ENCODE measurements at regions of chr5 and their contacts with region 1.

Region 1: DNA sequence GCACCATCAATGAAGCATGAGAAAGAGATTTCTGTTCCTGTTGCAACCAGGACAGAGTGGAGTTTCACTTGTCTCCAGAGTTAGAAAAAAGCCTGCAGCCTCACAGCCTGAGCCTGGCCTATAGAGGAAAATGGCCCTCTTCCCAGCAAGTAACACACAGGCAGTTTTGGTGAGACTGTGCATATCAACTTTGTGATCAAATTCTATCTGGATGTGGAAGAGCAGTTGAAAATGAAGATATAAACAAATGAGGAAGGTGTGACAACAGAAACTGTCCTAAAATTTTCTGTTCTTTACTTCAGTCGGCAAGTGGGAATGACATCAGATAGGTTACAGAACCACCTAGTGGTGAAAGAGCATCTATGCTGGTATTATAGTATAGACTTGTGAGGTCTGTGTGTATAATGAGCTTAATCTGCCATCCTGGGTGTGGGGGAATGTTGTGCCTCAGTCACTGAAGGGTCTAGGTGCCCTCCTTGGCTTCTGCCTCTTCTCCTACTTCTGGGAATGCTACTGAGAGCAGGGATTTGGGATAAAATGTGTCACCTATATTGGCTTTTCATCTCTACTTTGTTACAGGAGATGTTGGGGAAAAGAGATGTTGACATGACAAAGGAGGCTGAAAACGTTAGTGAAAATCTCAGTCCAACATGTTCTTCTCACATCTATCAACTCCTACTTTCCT is 28.2 kb downstream of the YIPF5 start:
- DNase-seq: peak; percentile 70
- H3K4me3 Mint-ChIP-seq: no peak overlapping the region
- H3K27ac Mint-ChIP-seq: no peak overlapping the region
- H3K4me1 Mint-ChIP-seq: peaks cover 15% of the 10 kb centered on the region
- H3K27me3 Mint-ChIP-seq: no peaks in the 10 kb centered on the region
- CTCF ChIP-seq: peak; percentile 89

Region 2: GRCh38 chr5:143506881-143507551 is 635.3 kb before region 1 on chr5:
- CTCF ChIA-PET with region 1: interaction called, 3 read pairs
- POLR2A ChIA-PET with region 1: interaction called, 3 read pairs
- intact Hi-C with region 1: loop called (anchors 10 kb)
- DNase-seq: peak; percentile 98
- H3K4me3 Mint-ChIP-seq: peak overlapping the region; percentile 44
- H3K27ac Mint-ChIP-seq: peak overlapping the region; percentile 84
- H3K4me1 Mint-ChIP-seq: peaks cover 41% of the 10 kb centered on the region
- H3K27me3 Mint-ChIP-seq: no peaks in the 10 kb centered on the region
- CTCF ChIP-seq: peak; percentile 16

Region 3: DNA sequence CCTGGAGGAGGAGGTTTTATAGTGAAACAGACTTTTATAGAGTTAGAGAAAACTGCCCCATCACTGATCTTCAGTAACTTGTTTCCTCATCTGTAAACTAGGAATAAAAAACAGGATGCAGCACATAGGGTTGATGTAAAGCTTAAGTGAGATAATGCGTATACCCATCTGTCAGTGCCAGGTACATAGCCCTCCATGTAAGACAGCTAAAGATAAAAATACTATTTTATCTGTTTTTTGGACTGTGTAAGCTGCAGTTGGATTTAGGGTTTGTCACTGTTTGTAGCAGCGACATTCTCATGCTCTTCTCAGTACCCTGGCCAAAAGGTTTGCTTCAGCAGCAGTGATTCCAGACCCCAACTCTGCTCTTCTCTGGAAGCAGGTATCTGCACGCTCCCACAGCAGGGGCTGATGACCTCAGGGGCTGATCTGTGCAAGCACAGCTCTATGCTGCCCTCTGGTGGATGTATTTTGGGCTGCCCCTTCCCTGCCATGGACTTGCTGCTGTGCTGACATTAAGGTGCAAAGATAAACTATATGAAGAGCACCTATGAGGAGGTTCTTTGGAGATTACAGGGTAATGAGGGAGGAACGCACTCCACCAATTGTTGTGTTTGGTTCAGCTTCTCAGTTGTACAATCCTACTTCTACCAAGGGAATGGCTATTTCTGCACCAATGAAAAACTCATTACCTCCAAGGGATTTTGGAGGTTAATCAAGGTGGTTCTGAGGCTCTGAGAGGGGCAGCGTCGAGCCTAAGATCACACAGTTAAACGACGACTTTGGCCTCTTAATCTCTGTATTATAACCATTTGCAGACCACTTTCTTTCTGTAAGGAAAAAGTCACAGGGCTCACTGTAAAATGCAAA is 317.2 kb before region 1 on chr5:
- CTCF ChIA-PET with region 1: interaction called, 71 read pairs
- POLR2A ChIA-PET with region 1: no interaction called
- intact Hi-C with region 1: loop called (anchors 1 kb)
- DNase-seq: peak; percentile 84
- H3K4me3 Mint-ChIP-seq: no peak overlapping the region
- H3K27ac Mint-ChIP-seq: no peak overlapping the region
- H3K4me1 Mint-ChIP-seq: peaks cover 6% of the 10 kb centered on the region
- H3K27me3 Mint-ChIP-seq: no peaks in the 10 kb centered on the region
- CTCF ChIP-seq: peak; percentile 99

Region 4: DNA sequence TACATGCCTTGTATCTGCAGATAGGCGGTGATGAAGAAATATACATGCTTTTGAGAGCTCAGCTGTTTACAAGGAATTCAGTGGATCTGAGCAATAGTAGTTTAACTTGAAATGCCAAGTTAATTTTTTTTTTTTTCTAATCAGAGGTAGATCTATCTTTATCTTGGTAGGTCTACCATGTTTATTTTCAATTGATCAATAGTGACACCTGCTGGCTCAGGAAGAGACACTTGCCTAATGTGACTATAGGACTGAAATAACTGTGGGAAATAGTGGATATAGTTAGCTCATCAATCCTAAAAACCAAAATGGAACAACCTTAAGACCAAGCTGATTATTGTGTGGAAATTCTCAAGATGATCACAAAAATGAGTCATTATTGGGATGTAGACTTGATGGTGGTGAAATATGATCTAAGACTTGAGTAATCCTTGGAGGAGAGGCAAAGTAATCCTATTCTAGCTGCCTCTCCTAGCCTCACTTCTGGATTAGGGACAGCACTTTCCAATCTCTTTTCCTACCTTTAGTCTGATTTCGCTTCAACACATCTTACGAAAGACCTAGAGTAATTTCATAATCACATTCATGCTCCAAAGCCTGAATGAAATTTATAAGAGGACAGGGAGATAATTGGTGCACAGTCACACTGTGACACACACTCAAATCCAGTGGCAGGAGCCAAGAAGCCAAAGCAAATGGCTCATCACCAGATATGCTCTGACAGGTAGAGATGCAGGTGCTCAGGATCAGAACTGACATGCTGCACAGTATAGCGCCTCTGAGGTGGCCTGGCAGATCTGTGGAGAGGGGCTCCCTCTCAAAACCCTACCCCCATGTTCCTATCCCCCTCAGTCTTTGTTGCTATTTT is 174.0 kb before region 1 on chr5:
- CTCF ChIA-PET with region 1: interaction called, 9 read pairs
- POLR2A ChIA-PET with region 1: interaction called, 3 read pairs
- intact Hi-C with region 1: loop called (anchors 1 kb)
- DNase-seq: peak; percentile 80
- H3K4me3 Mint-ChIP-seq: no peak overlapping the region
- H3K27ac Mint-ChIP-seq: no peak overlapping the region
- H3K4me1 Mint-ChIP-seq: peaks cover 24% of the 10 kb centered on the region
- H3K27me3 Mint-ChIP-seq: no peaks in the 10 kb centered on the region
- CTCF ChIP-seq: peak; percentile 76

Region 5: DNA sequence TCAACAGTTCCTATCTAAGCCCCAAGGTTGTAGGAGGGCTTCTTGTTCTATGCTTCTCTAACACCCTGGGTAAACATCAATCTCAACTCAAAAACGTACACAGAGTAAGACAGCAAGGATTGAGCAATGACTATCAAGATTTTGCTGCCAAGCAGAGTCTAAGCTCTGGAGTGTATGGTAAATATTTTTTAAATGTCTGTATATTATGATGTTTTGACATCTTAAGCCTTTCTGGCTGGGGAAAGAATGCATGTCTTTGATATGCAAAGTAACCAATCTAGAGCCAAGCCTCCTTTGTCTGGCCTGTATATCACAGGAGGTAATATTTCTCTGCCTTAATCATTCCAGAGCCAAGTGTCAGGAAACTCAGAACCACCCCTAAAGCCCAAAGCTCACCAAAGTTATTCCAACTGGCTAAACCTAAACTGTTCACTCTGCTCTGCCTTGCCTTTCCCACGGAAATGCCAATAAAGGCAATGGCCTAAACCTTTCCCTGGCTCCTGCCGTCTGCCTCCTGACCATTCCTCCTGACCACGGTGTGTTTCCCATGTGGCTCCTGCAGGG is 17.0 kb before region 1 on chr5:
- CTCF ChIA-PET with region 1: interaction called, 45 read pairs
- POLR2A ChIA-PET with region 1: interaction called, 6 read pairs
- intact Hi-C with region 1: no loop called
- DNase-seq: no peak
- H3K4me3 Mint-ChIP-seq: no peak overlapping the region
- H3K27ac Mint-ChIP-seq: peak overlapping the region; percentile 41
- H3K4me1 Mint-ChIP-seq: peaks cover 13% of the 10 kb centered on the region
- H3K27me3 Mint-ChIP-seq: no peaks in the 10 kb centered on the region
- CTCF ChIP-seq: no peak

Region 6: DNA sequence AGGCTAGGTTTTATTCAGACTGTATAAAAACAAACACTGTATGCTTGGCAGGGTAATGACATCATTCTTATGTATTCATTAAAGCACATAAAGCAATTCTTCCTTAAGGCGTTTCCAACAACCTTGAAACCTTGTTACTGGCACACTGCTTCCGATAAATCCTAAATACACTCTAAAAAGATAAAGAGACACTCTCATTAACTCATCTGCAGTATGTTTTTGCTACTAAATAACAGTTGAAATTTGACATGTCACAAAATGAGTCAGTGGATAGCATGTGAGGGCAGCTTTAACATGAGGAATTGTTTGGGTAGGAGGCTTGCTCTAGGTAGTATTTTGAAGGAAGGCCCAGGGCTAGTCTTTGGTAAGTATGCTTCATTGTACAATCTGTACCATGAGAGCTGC is 14.5 kb after region 1 on chr5:
- CTCF ChIA-PET with region 1: interaction called, 11 read pairs
- POLR2A ChIA-PET with region 1: interaction called, 3 read pairs
- intact Hi-C with region 1: no loop called
- DNase-seq: no peak
- H3K4me3 Mint-ChIP-seq: no peak overlapping the region
- H3K27ac Mint-ChIP-seq: peak overlapping the region; percentile 44
- H3K4me1 Mint-ChIP-seq: peaks cover 5% of the 10 kb centered on the region
- H3K27me3 Mint-ChIP-seq: no peaks in the 10 kb centered on the region
- CTCF ChIP-seq: no peak

Region 7: DNA sequence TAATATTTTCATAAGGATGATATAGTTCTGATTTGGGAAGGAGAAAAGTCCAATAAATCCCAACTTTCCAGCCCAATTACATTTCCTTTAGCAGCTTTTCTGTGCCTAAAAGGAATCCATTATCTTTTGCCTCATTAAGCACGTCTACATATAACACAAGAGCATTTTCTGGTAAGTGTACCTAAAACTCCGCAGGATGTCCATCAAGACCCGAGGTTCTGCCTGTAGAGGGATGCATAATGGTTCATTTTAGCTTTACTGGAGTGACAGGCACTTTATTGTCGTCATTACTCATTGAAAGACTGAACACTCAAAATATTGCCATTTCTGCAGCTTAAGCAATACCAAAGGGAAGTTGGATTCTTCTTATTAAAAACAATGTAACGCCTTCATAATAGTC is 1023.8 kb after region 1 on chr5:
- CTCF ChIA-PET with region 1: no interaction called
- POLR2A ChIA-PET with region 1: no interaction called
- intact Hi-C with region 1: no loop called
- DNase-seq: no peak
- H3K4me3 Mint-ChIP-seq: no peak overlapping the region
- H3K27ac Mint-ChIP-seq: no peak overlapping the region
- H3K4me1 Mint-ChIP-seq: no peaks in the 10 kb centered on the region
- H3K27me3 Mint-ChIP-seq: no peaks in the 10 kb centered on the region
- CTCF ChIP-seq: no peak